Activated CD4-positive, alpha-beta memory T cell treated with anti-CD3 and anti-CD28 coated beads for 36 hours (primary cell): ENCODE measurements at regions of chr16 and their contacts with region 1.

Region 1: GRCh38 chr16:80580109-80580832 is 39.5 kb downstream of the DYNLRB2 start:
- DNase-seq: peak; percentile 89
- H3K4me3 Mint-ChIP-seq: peak overlapping the region; percentile 52
- H3K27ac Mint-ChIP-seq: peak overlapping the region; percentile 89
- H3K4me1 Mint-ChIP-seq: peaks cover 52% of the 10 kb centered on the region
- H3K27me3 Mint-ChIP-seq: peaks cover 2% of the 10 kb centered on the region

Region 2: DNA sequence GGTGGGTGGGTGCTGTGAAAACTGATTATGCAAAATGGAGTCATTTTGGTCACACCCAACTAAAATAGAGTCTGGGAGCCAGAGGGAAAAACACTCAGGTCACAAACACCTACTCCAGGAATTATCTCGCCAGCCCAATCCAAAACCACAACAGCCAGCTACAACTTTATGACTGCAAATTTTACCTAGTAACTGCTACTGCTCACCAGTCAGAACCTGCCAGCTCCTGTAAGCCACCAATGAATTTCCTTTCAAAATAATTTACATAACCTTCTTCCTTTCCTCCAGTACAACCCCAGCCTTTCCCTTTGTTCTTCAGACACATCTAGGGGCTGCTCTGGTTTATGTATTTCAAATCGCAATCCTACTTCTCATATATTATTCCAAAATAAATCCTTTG is 92.1 kb before region 1 on chr16:
- CTCF ChIA-PET with region 1: no interaction called
- POLR2A ChIA-PET with region 1: no interaction called
- intact Hi-C with region 1: no loop called
- DNase-seq: no peak
- H3K4me3 Mint-ChIP-seq: no peak overlapping the region
- H3K27ac Mint-ChIP-seq: no peak overlapping the region
- H3K4me1 Mint-ChIP-seq: no peaks in the 10 kb centered on the region
- H3K27me3 Mint-ChIP-seq: peaks cover 24% of the 10 kb centered on the region

Region 3: GRCh38 chr16:80526425-80527061 is 53.7 kb before region 1 on chr16:
- CTCF ChIA-PET with region 1: interaction called, 21 read pairs
- POLR2A ChIA-PET with region 1: no interaction called
- intact Hi-C with region 1: loop called (anchors 1 kb)
- DNase-seq: peak; percentile 63
- H3K4me3 Mint-ChIP-seq: no peak overlapping the region
- H3K27ac Mint-ChIP-seq: no peak overlapping the region
- H3K4me1 Mint-ChIP-seq: no peaks in the 10 kb centered on the region
- H3K27me3 Mint-ChIP-seq: peaks cover 1% of the 10 kb centered on the region

Region 4: DNA sequence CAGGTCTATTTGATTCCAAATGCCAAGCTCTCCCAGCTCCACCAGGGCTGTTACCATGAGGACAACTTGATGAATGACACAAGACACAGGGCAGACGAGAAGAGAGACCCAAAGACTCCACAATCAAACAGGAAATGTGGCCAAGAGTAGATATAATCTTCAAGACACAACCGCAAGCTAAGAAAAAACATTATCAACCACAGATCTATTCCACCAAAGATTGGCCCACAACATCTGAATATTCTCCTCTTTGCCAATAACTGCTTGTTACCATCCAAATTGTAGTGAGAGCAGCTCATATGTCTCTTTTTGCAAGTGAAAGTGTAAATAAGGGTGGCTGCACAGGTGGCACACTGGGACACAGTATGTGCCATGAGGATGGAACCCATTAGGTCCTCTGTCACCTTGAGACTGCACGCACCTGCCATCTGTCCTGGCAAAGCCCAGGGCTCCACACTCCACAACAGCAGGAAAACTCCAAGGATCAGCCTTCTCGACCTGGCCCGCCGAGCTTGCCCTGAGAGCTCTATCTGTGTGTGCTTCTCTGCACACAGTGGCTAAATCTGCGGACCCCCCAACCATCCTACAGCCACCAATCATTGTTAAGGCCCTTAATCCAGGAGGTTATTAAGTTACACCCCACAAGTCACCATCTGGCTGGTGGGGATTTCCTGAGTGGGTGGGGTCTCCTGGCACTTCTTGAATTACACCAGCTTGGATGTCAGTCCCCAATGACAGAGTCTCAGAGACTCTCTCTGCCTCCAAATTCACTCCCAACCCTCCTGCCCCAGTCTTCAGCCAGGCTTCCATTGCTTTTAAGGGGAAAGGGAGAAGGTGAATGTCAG is 11.0 kb after region 1 on chr16:
- CTCF ChIA-PET with region 1: interaction called, 19 read pairs
- POLR2A ChIA-PET with region 1: interaction called, 14 read pairs
- intact Hi-C with region 1: no loop called
- DNase-seq: peak; percentile 34
- H3K4me3 Mint-ChIP-seq: peak overlapping the region; percentile 2
- H3K27ac Mint-ChIP-seq: peak overlapping the region; percentile 21
- H3K4me1 Mint-ChIP-seq: peaks cover 35% of the 10 kb centered on the region
- H3K27me3 Mint-ChIP-seq: peaks cover 21% of the 10 kb centered on the region

Region 5: GRCh38 chr16:80718249-80719220 is 138.3 kb after region 1 on chr16:
- CTCF ChIA-PET with region 1: no interaction called
- POLR2A ChIA-PET with region 1: no interaction called
- intact Hi-C with region 1: no loop called
- DNase-seq: no peak
- H3K4me3 Mint-ChIP-seq: no peak overlapping the region
- H3K27ac Mint-ChIP-seq: no peak overlapping the region
- H3K4me1 Mint-ChIP-seq: peaks cover 15% of the 10 kb centered on the region
- H3K27me3 Mint-ChIP-seq: no peaks in the 10 kb centered on the region

Region 6: DNA sequence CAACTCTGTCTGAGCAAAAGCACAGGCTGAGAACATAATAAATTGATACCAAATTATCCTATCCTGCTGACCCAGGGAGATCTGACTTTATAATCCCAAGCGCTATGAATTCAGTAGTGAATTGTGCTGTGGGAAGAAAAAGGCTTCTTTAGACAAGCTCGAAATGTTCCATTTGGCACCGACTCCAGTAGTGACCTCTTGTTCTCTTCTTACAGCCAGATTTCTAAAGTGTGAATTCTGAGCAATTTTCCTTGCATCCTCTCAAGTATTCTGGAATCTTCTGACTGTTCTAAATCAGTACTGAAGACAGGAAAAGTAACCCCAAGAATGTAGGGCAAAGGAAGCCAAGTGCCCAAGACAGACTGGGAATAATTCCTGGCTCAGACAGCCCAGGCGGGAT is 166.0 kb after region 1 on chr16:
- CTCF ChIA-PET with region 1: no interaction called
- POLR2A ChIA-PET with region 1: no interaction called
- intact Hi-C with region 1: loop called (anchors 5 kb)
- DNase-seq: no peak
- H3K4me3 Mint-ChIP-seq: no peak overlapping the region
- H3K27ac Mint-ChIP-seq: no peak overlapping the region
- H3K4me1 Mint-ChIP-seq: peaks cover 35% of the 10 kb centered on the region
- H3K27me3 Mint-ChIP-seq: no peaks in the 10 kb centered on the region

Region 7: DNA sequence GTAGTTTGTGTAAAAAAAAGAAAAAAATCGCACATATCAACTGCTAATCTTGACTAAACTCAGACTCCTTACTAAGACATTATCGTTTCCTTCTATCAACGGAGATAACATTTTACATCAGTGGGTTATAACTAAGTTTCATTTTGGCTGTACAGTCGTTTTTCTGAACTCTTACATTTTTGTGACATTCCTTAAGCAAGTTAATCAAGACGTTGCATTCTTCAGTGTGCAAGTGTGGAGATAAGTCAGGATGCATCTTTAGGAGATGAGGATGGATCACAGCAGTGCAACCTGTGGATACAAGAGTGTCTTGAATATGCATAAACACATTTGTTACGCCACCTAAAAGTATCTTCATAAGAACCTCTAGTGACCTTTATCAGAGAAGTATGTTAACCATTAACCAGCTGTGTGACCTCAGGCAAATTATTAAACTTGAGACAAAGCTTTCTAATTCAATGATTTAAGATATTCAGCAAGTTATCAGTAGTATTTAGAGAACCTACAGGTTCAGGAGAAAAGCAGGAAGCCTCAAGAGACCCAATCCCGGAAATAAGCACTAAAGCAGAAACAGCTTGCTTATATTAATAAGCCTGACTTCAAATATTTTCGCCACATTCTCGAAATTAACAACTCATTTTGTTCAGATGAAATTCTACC is 417.0 kb after region 1 on chr16:
- CTCF ChIA-PET with region 1: no interaction called
- POLR2A ChIA-PET with region 1: no interaction called
- intact Hi-C with region 1: loop called (anchors 2 kb)
- DNase-seq: no peak
- H3K4me3 Mint-ChIP-seq: peak overlapping the region; percentile 76
- H3K27ac Mint-ChIP-seq: peak overlapping the region; percentile 94
- H3K4me1 Mint-ChIP-seq: peaks cover 68% of the 10 kb centered on the region
- H3K27me3 Mint-ChIP-seq: no peaks in the 10 kb centered on the region